ENCODE measurements at regions of chr1 and their contacts with region 1.

Region 1: GRCh38 chr1:20717452-20718342 is at the start of gene KIF17:
- DNase-seq: peak; percentile 58
- H3K4me3 ChIP-seq: peak within 1 kb of the TSS in 1 of 3 experiments; percentile 25
- H3K27ac ChIP-seq: no peak within 1 kb of the TSS
- H3K4me1 ChIP-seq: no peaks in the 10 kb centered on the region
- H3K27me3 ChIP-seq: peaks cover 0 to 5% of the 10 kb centered on the region in 2 experiments
- CTCF ChIP-seq: no peak
- POLR2A ChIP-seq: no peak
- total RNA-seq, gene KIF17: 0.72 and 1.5 TPM in 2 replicates

Region 2: DNA sequence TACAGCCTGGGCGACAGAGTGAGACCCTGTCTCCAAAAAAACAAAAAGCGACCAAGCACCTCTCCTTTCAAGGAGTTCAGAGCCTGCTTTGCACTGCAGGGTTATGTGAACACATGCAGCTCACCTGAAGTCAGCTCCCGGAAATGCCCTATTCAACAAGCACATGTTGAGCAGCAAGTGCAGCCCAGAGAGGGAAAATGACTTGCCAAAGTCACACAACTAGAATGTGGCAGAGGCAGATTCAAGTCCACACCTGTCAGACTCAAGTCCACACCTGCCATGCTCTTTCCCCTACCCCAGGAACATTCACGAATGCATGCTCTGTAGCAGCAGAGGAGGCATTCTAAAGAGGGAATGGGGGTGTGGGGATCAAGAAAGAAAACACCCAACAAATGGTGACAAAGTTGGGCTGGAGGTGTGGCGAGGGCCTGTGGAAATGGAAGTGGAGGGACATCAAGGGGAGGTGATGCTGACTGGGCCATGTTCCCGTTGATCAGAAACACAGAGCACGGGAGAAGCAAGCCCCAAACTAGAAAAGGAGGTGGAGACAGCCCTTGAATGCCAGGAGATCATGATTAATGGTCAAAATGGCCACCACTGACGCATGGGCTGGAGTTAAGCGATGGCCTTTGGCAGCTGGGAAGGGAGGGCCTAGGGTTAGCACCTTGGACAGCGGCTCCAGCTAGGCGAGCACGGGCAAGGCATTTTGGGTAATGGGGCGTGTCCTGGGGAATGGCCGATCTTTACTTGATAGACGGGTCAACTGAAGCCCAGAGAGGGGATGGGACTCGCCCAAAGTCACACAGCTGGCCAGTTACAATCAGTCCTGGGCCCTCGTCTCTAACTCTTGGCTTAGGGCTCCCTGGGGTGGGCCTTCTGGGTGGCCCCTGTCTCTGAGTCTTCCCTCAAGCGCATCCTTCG is 930.0 kb after region 1 on chr1:
- CTCF ChIA-PET with region 1: no interaction called
- POLR2A ChIA-PET with region 1: interaction called, 10 read pairs
- dilution Hi-C with region 1: no loop called
- intact Hi-C with region 1: no loop called
- DNase-seq: peak; percentile 53
- H3K4me3 ChIP-seq: no peak overlapping the region
- H3K27ac ChIP-seq: no peak overlapping the region
- H3K4me1 ChIP-seq: peaks cover 3% of the 10 kb centered on the region
- H3K27me3 ChIP-seq: peaks cover 12 to 16% of the 10 kb centered on the region in 2 experiments
- CTCF ChIP-seq: no peak
- POLR2A ChIP-seq: no peak